ENCODE measurements at regions of chr1 and their contacts with region 1.

Region 1: DNA sequence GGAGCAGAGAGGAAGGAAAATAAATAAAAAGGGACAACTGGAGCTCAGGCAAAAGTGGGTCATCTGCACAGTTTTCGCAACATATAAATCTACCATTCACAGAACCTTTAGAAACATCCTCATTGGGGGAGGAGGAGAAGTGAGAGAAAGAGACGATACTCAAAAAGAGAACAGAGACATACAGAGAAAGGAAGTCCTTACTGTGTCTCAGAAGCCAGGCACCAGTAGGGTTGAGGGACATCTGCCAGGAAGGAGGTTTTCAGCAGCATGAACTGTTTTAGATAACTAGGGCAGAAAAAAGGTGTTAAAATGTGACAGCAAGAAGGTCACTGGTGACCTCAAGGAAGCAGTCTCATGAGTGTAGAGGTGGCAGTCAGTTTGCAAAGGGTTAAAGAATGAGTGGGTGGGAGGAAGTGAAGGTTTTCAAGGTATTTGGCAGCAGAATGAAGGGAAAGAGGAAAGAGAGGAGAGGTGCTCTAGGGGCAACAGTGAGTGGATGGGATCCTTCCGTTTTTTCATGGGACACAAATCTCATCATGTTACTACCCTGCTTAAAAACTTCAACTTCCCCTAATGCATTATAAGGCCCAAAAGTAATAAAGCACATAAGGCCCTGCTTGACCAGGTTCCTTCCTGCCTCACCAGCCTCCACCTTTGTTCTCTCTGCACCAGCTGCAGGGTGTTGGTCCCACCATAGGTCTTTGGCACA is 9.5 kb downstream of the JAK1 start:
- DNase-seq: no peak
- ATAC-seq: peak; percentile 25 to 33
- H3K4me3 ChIP-seq: no peak overlapping the region
- H3K27ac ChIP-seq: peak overlapping the region; percentile 8
- H3K4me1 ChIP-seq: peaks cover 19% of the 10 kb centered on the region
- H3K27me3 ChIP-seq: no peaks in the 10 kb centered on the region

Region 2: GRCh38 chr1:64877151-64877550 is 79.7 kb before region 1 on chr1:
- intact Hi-C with region 1: loop called in 1 of 4 experiments (anchors 10 kb)
- DNase-seq: no peak
- ATAC-seq: no peak
- H3K4me3 ChIP-seq: no peak overlapping the region
- H3K27ac ChIP-seq: no peak overlapping the region
- H3K4me1 ChIP-seq: peaks cover 2% of the 10 kb centered on the region
- H3K27me3 ChIP-seq: no peaks in the 10 kb centered on the region